ENCODE measurements at regions of chr1 and their contacts with region 1.

Region 1: DNA sequence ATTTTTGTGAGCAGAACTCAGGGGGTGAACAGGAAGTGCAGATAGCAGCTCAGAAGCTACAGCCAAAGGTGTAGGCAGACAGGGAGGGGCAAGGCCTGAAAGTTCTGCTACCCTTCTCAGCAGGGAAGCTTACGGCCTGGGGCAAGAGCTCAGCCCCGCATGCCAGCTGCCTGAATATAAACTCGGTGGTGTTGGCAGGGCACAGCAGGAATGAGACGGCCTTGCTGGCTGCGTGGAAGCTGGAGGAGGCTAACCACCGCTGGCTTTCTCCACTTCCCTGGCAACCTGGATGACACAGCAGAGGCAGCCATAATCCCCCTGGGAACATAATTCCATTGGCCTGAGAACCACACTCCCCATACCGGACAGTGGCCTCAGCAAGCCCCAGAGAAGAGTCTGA is 82.0 kb upstream of the PRRC2C start:
- DNase-seq: no peak
- ATAC-seq: 0 out of 2 replicates have a peak, but pooled peaks have one; percentile 63
- H3K4me3 ChIP-seq: no peak overlapping the region
- H3K27ac ChIP-seq: no peak overlapping the region
- H3K4me1 ChIP-seq: no peaks in the 10 kb centered on the region
- H3K27me3 ChIP-seq: no peaks in the 10 kb centered on the region
- CTCF ChIP-seq: no peak

Region 2: GRCh38 chr1:171048014-171048413 is 355.4 kb before region 1 on chr1:
- CTCF ChIA-PET with region 1: no interaction called
- POLR2A ChIA-PET with region 1: no interaction called
- in situ Hi-C with region 1: no loop called
- intact Hi-C with region 1: no loop called
- DNase-seq: no peak
- ATAC-seq: no peak
- H3K4me3 ChIP-seq: no peak overlapping the region
- H3K27ac ChIP-seq: no peak overlapping the region
- H3K4me1 ChIP-seq: no peaks in the 10 kb centered on the region
- H3K27me3 ChIP-seq: no peaks in the 10 kb centered on the region
- CTCF ChIP-seq: no peak

Region 3: DNA sequence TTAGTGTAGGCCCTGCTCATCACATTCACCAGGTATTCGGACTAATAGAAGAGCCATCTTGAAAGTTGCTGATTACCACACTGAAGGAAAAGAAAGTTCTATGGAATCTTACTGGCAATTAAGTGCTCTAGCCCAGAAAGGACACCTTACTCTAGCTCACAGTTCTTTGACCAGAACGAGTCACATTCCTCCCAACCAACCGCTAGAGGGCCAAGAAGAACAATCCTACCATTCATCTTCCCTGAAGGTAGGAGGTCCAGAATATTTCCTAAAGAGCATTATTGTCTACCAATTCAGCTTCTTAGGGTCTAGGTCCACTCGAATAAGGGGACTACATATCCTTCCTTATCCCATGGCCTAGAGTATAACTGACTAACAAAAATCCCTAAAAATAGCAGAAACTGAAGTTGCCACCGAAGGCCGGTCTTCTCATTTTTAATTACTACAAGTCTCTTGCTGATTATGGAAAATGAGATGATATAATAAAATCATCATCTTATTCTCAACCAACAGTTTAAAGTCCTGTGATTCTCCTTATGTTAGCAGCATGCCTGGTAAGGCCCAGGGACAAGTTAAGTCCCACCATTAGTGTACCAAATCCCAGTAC is 157.8 kb before region 1 on chr1:
- CTCF ChIA-PET with region 1: no interaction called
- POLR2A ChIA-PET with region 1: no interaction called
- in situ Hi-C with region 1: no loop called
- intact Hi-C with region 1: loop called (anchors 10 kb)
- DNase-seq: no peak
- ATAC-seq: peak; percentile 89
- H3K4me3 ChIP-seq: no peak overlapping the region
- H3K27ac ChIP-seq: no peak overlapping the region
- H3K4me1 ChIP-seq: no peaks in the 10 kb centered on the region
- H3K27me3 ChIP-seq: peaks cover 11% of the 10 kb centered on the region
- CTCF ChIP-seq: peak; percentile 81

Region 4: DNA sequence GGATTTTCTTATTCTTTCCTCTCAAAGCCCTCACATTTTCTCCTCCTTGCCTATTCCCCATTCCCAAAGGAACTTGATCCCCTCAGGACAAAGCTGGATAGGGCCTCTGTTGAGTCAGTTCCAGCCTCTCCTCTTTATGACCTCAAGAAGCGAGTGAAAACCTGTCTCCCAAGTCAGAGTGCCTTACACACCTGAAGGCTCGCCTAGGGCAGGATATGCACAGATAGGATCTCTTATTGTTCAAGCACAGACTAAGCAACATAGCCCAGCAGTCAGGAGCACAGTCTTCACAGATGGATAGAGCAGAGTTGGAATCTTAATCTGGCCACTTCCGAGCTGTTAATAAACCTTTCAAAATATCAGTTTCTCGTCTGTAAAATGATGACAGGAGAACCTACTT is 21.1 kb after region 1 on chr1:
- CTCF ChIA-PET with region 1: interaction called, 3 read pairs
- POLR2A ChIA-PET with region 1: interaction called, 13 read pairs
- in situ Hi-C with region 1: no loop called
- intact Hi-C with region 1: no loop called
- DNase-seq: no peak
- ATAC-seq: no peak
- H3K4me3 ChIP-seq: no peak overlapping the region
- H3K27ac ChIP-seq: no peak overlapping the region
- H3K4me1 ChIP-seq: no peaks in the 10 kb centered on the region
- H3K27me3 ChIP-seq: no peaks in the 10 kb centered on the region
- CTCF ChIP-seq: no peak

Measured in Panc1 (cell line).